PC-3 (cell line): ENCODE measurements at regions of chr5 and their contacts with region 1.

Region 1: GRCh38 chr5:138579517-138579863 is 4.3 kb upstream of the HSPA9 start:
- DNase-seq: no peak
- ATAC-seq: no peak
- H3K4me3 ChIP-seq: no peak overlapping the region
- H3K27ac ChIP-seq: no peak overlapping the region
- H3K4me1 ChIP-seq: peaks cover 3% of the 10 kb centered on the region; the same call in 1 of the 2 replicates
- H3K27me3 ChIP-seq: no peaks in the 10 kb centered on the region
- CTCF ChIP-seq: no peak

Region 2: GRCh38 chr5:138559937-138560336 is 19.6 kb before region 1 on chr5:
- CTCF ChIA-PET with region 1: no interaction called
- POLR2A ChIA-PET with region 1: no interaction called
- intact Hi-C with region 1: no loop called
- DNase-seq: peak; percentile 23
- ATAC-seq: no peak
- H3K4me3 ChIP-seq: no peak overlapping the region
- H3K27ac ChIP-seq: no peak overlapping the region
- H3K4me1 ChIP-seq: no peaks in the 10 kb centered on the region
- H3K27me3 ChIP-seq: no peaks in the 10 kb centered on the region
- CTCF ChIP-seq: no peak

Region 3: DNA sequence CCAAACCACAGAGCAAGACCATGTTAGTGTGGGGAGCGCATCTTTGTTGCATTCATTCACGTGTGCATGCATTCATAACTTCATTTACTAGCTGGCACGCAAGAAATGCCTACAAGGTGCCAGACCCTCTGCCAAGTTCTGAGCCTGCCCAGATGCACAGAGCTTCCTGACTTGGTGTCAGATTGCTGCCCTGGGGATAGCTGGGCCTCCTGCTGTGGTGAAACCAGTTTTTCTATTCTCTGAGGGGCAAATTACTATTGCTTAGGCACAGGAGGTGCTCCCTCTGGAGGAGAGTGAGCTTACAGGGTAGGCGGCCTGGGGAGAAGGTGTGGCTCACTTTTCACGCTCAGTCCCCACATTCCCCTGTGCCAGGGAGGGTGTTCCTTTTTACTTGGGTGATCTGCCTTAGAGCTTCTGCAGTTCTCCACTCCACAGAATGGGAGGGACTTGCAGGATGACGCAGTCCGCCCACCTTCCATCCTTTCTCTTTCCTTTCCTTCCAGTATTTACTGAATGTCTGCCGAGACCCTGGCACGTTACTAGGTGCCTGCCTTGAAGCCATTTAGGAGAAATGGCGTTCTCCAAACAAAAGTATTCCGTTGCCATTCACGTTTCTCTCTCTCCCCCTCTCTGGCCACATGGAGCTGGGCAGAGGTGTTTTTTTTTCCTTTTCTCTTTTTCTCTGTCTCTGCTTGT is 145.8 kb after region 1 on chr5:
- CTCF ChIA-PET with region 1: no interaction called
- POLR2A ChIA-PET with region 1: no interaction called
- intact Hi-C with region 1: loop called (anchors 1 kb)
- DNase-seq: peak; percentile 91
- ATAC-seq: peak; percentile 96
- H3K4me3 ChIP-seq: no peak overlapping the region
- H3K27ac ChIP-seq: peak overlapping the region; percentile 37
- H3K4me1 ChIP-seq: peaks cover 14% of the 10 kb centered on the region
- H3K27me3 ChIP-seq: no peaks in the 10 kb centered on the region
- CTCF ChIP-seq: peak; percentile 66

Region 4: GRCh38 chr5:139262742-139263445 is 683.4 kb after region 1 on chr5:
- CTCF ChIA-PET with region 1: interaction called, 8 read pairs
- POLR2A ChIA-PET with region 1: interaction called, 4 read pairs
- intact Hi-C with region 1: loop called (anchors 1 kb)
- DNase-seq: peak; percentile 83
- ATAC-seq: peak; percentile 100
- H3K4me3 ChIP-seq: no peak overlapping the region
- H3K27ac ChIP-seq: no peak overlapping the region
- H3K4me1 ChIP-seq: no peaks in the 10 kb centered on the region
- H3K27me3 ChIP-seq: no peaks in the 10 kb centered on the region
- CTCF ChIP-seq: peak; percentile 80

Region 5: DNA sequence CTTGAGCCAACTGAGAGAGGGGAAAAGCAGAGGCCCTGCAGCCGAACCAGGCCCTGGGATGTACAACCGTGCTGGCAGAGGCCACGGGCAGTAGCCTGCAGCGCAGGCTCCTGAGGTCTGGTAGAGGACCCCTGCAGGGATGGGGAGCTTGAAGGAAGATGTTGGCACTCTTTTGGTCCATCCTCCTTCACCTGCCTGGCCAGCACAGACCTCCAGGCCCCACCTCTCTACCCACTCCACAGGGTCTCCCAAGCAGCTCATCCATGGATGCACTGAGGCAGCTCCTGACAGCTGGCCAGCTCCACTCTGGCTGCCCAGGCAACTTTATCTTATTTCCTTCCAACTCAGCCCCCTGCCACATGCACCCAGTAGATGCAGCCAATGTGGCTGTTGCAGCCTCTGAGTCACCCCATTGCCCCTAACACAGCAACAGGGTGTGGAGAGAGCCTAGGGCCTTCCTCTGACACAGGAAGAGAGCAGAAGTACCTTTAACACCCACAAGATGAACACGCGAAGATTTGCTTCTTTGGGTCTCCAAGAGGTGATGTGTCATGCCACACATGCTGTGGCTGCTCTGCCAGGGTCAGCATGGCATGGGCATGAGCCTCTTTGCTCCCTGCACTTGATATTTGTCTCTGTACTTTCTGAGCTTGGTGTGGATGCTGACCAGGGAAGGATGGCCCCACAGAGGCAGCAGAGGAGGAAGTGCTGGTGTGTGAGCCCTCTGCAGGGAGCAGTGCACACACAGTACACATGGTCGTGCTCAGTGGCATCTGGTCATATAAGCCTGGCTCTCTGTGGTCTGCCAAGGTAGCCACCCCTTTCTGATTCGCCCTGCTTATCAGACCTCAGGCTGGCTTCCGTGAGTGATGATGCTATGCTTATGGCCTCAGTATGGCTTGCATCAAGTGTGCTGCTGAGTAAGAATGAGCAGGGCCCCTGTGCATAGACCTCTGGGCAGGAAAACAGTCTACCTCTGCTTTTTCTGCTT is 1346.5 kb after region 1 on chr5:
- CTCF ChIA-PET with region 1: no interaction called
- POLR2A ChIA-PET with region 1: no interaction called
- intact Hi-C with region 1: no loop called
- DNase-seq: no peak
- ATAC-seq: peak; percentile 31; the same call in 1 of the 2 replicates
- H3K4me3 ChIP-seq: no peak overlapping the region
- H3K27ac ChIP-seq: no peak overlapping the region
- H3K4me1 ChIP-seq: no peaks in the 10 kb centered on the region
- H3K27me3 ChIP-seq: no peaks in the 10 kb centered on the region
- CTCF ChIP-seq: no peak